Esophagus muscularis mucosa (tissue), 4 donors: ENCODE measurements at regions of chr14 and their contacts with region 1.

Region 1: DNA sequence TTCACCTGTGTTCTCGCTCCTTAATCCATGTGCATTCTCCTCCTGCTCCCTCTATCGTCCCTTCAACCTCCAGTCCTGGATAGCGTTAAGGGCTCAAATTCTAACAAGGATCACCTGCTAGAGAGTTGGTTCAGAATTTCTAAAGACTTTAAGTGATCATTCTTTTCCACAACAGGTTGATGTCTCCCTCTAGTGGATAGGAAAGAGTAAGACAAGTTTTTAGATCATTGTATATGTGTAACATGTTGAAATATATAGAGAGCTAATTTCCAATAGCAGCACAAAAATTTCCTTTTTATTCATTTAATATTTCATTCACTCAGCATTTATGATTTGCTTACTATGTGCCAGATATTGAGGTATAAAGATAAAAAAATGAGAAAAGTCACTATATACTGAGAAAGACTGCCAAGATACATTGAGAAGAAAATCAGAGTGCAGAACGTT is 9.3 kb upstream of the ESR2 start:
- DNase-seq: no peak
- H3K4me3 ChIP-seq: no peak overlapping the region
- H3K27ac ChIP-seq: no peak overlapping the region
- H3K4me1 ChIP-seq: no peaks in the 10 kb centered on the region
- H3K27me3 ChIP-seq: no peaks in the 10 kb centered on the region
- CTCF ChIP-seq: peak; percentile 62 to 81 (median 68)
- EP300 ChIP-seq: no peak
- POLR2A ChIP-seq: no peak

Region 2: GRCh38 chr14:63795532-63795931 is 508.0 kb before region 1 on chr14:
- intact Hi-C with region 1: loop called (anchors 10 kb)
- DNase-seq: no peak
- H3K4me3 ChIP-seq: no peak overlapping the region
- H3K27ac ChIP-seq: no peak overlapping the region
- H3K4me1 ChIP-seq: peaks cover 0 to 11% (median 10%) of the 10 kb centered on the region in 4 donors
- H3K27me3 ChIP-seq: no peaks in the 10 kb centered on the region
- CTCF ChIP-seq: no peak
- EP300 ChIP-seq: no peak
- POLR2A ChIP-seq: no peak